ENCODE measurements at regions of chr12 and their contacts with region 1.

Region 1: GRCh38 chr12:53379389-53380103 is 430 bp upstream of the SP1 start:
- DNase-seq: peak; percentile 99
- H3K4me3 Mint-ChIP-seq: no peak overlapping the region
- H3K27ac Mint-ChIP-seq: no peak overlapping the region
- H3K4me1 Mint-ChIP-seq: peaks cover 36% of the 10 kb centered on the region
- H3K27me3 Mint-ChIP-seq: no peaks in the 10 kb centered on the region

Region 2: DNA sequence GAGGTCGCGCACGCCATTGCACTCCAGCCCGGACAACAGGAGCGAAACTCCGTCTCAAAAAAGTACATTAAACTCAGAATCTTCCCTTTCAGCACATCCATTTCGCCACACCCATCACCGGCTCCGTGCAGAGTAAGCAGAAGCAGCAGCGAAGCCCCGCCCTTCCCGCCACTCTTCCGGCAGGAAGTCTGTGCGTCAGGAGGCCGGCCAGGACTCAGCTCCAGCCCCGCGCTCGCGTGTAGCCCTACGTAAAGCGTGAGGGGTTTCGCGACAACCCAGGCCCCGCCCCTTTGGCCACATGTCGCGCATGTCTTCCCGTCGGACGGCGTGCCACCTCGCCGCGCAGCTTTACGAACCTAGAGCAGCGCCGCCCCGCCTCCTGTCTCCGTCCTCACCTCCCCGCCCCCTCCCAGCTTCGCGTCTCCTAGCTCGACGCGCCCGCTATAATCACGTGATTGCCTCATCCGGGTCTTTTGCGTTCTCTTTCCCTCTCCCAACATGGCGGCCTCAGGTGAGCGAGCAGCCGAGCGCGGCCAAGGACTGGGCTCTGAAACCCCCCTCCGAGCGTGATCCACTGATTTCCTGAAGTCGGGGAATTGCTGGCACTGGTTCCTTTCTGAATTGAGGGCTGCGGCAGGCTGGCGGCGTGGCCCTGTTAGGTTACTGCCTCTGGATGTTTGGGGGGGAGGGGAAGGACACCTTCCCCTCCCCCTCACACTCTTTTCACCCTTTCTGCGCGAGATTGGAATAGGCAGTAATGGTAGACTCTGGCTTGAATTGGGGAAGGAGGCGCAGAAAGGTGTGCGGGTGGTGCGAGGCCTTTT is 373.3 kb before region 1 on chr12 and contains the start of gene EIF4B:
- CTCF ChIA-PET with region 1: no interaction called
- POLR2A ChIA-PET with region 1: no interaction called
- intact Hi-C with region 1: loop called (anchors 5 kb)
- DNase-seq: peak; percentile 100
- H3K4me3 Mint-ChIP-seq: peak within 1 kb of the TSS; percentile 98
- H3K27ac Mint-ChIP-seq: peak within 1 kb of the TSS; percentile 98
- H3K4me1 Mint-ChIP-seq: peaks cover 50% of the 10 kb centered on the region
- H3K27me3 Mint-ChIP-seq: no peaks in the 10 kb centered on the region
- total RNA-seq, gene EIF4B: 686 to 718 TPM

Region 3: GRCh38 chr12:53344824-53345485 is 34.6 kb before region 1 on chr12:
- CTCF ChIA-PET with region 1: interaction called, 13 read pairs
- POLR2A ChIA-PET with region 1: interaction called, 4 read pairs
- intact Hi-C with region 1: no loop called
- DNase-seq: peak; percentile 86
- H3K4me3 Mint-ChIP-seq: peak overlapping the region; percentile 92
- H3K27ac Mint-ChIP-seq: peak overlapping the region; percentile 56
- H3K4me1 Mint-ChIP-seq: peaks cover 14% of the 10 kb centered on the region
- H3K27me3 Mint-ChIP-seq: no peaks in the 10 kb centered on the region

Region 4: DNA sequence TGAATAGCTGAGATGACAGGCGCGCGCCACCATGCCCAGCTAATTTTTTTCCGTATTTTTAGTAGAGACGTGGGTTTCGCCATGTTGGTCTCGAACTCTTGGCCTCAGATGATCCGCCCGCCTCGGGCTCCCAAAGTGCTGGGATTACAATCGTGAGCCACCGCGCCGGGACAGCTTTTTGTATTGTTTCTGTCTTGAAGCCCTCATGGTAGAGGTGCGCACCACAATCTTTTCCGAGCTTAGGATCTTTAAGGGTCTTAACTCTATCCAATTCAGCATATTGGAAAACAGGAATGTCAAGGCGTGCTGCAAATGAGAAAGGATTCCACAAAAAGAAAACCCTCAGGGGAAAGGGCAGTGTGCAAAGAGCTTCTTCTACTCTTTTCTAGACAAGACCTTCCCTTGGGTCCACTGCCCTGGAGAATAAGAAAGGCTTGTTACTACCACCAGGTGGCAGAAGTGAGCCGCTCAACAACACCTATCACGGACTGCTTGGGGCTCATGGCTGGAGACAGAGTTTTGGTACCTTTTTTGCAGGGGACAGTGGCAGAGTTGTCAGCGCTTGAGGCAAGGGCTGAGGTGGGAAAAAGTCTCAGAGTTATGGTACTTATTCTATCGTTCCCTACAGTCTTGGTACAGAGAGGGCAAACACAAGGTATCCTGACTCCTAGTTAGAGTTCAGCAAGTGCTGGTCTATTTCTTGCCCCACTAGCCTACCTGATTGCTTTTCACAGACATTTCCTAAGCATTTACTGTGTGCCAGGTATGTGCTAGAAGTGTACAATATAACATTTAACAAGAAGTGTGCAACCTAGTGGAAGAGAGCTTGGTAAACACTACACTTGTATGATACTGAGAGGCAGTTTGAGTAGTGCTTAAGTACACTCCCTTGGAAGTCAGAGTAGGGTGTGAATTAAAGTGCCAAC is 27.0 kb before region 1 on chr12:
- CTCF ChIA-PET with region 1: interaction called, 82 read pairs
- POLR2A ChIA-PET with region 1: interaction called, 3 read pairs
- intact Hi-C with region 1: loop called (anchors 1 kb)
- DNase-seq: peak; percentile 90
- H3K4me3 Mint-ChIP-seq: no peak overlapping the region
- H3K27ac Mint-ChIP-seq: peak overlapping the region; percentile 12
- H3K4me1 Mint-ChIP-seq: peaks cover 9% of the 10 kb centered on the region
- H3K27me3 Mint-ChIP-seq: no peaks in the 10 kb centered on the region

Region 5: DNA sequence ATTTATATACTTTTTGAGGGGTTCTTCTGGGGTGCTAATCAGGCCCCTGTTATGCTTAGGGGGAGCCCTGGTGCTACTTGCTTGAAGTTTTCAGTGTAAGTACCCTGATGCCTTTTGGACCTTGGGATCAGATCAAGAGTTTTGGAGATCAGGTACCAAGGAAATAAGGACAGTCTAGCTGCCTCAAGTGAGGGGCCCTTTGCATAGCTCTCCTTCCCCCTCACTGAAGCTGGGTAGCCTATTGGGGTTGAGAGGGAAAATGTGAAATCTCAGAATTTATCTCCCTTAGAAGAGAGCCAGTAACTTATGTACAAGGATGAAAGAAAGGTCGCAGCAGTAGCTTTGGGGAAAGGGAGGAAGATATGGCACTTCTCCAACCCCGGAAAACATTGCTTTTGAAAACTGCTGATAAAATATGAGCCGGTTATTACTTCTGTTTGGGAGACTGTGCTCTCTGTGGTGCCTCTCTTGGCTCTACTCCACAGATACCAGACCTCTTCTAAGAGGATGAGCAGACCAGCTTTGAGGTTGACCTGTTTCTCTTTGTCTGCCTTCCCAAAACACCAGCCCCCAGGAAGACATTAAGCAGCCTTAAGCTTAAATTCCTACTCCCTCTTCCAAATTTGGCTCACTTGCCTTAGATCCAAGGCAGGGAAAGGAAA is 35.3 kb after region 1 on chr12:
- CTCF ChIA-PET with region 1: interaction called, 18 read pairs
- POLR2A ChIA-PET with region 1: no interaction called
- intact Hi-C with region 1: no loop called
- DNase-seq: no peak
- H3K4me3 Mint-ChIP-seq: no peak overlapping the region
- H3K27ac Mint-ChIP-seq: no peak overlapping the region
- H3K4me1 Mint-ChIP-seq: peaks cover 54% of the 10 kb centered on the region
- H3K27me3 Mint-ChIP-seq: no peaks in the 10 kb centered on the region

Region 6: DNA sequence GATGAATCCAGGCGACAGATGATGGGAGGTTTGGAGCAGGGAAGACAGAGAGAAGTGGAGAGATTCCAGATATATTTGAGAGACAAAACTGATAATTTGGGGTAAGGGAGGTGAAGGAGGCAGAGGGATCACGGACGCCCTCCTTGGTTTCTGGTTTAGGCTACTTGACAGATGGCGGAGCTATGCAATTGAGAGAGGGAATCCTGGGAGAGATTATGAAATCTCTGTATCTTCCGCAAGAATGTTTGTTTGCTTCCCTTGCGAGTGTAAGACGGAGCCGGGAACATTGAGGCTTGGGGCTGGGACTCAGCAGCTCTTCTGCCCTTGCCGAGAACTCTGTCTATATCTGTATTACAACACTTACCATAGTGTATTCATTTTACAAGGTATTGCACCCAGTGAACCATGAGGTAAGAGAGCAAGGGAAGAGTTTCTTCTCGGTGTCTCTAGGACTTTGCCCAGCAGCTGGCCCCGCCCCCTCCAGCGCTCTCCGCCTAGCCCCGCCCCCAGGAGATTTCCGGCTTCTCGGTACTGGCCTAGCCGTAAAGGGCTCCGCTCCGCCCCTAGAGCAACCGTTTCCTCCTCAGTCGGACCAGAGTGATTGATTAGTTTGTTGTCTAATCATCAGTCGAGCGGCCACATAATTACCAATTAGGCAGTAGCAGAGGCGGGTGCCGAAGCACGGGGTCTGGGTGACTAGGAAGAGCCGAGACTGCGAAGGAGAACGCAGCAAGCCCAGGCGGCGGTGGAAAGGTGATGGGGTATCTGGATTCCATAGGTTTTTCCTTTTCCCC is 61.7 kb after region 1 on chr12 and contains the start of gene PRR13:
- CTCF ChIA-PET with region 1: interaction called, 4 read pairs
- POLR2A ChIA-PET with region 1: no interaction called
- intact Hi-C with region 1: loop called (anchors 1 kb)
- DNase-seq: peak; percentile 100
- H3K4me3 Mint-ChIP-seq: peak within 1 kb of the TSS; percentile 97
- H3K27ac Mint-ChIP-seq: peak within 1 kb of the TSS; percentile 93
- H3K4me1 Mint-ChIP-seq: peaks cover 37% of the 10 kb centered on the region
- H3K27me3 Mint-ChIP-seq: no peaks in the 10 kb centered on the region
- total RNA-seq, gene PRR13: 218 to 221 TPM

Region 7: DNA sequence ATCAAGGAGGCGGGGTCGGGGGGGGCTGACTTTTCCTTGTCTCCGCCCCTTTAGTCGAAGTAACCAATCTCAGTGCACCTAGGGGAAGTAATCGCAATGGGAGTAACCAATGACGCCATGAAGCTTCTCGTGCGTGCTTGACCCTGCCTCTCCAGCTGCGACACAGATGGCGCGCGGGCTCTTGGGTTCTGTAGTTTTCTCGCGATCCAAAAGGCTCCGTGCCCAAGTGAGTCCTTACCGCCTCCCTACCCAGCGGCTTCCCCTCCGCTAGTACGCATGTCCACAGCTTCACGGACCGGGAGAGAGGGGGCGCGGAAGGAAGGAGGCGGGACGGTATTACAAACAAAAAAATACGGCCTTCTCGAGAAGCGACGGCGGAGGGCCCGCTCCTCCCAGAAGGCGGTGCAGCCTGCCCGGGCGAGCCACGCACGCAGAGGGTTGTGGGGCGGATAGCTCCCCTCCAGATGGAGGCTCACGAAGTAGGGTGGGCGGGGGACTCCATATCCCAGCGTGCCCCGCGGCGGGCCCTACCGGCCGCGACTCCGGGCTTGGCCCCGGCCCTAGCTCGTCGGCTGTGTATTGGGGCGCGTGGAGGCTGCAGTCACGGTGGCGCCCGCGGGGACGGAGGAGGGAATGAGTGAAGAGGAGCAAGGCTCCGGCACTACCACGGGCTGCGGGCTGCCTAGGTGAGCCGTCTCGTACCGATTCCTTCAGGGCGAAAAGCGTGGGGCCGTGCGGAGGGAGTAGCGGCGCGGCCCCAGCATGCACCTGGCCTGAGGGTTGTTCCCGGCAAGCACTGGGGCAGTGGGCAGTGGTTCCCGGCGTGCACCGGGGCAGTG is 121.4 kb after region 1 on chr12 and contains the start of gene TARBP2:
- CTCF ChIA-PET with region 1: interaction called, 3 read pairs
- POLR2A ChIA-PET with region 1: interaction called, 5 read pairs
- intact Hi-C with region 1: loop called (anchors 1 kb)
- DNase-seq: peak; percentile 96
- H3K4me3 Mint-ChIP-seq: peak within 1 kb of the TSS; percentile 84
- H3K27ac Mint-ChIP-seq: peak within 1 kb of the TSS; percentile 93
- H3K4me1 Mint-ChIP-seq: peaks cover 39% of the 10 kb centered on the region
- H3K27me3 Mint-ChIP-seq: no peaks in the 10 kb centered on the region
- total RNA-seq, gene TARBP2: 27.5 to 29.7 TPM

Measured in activated CD4-positive, alpha-beta memory T cell treated with anti-CD3 and anti-CD28 coated beads for 36 hours (primary cell).